Psoas muscle (tissue), 8 donors: ENCODE measurements at regions of chr18 and their contacts with region 1.

Region 1: GRCh38 chr18:49544362-49544761 is 17.5 kb upstream of the LIPG start:
- DNase-seq: no peak
- ATAC-seq: no peak
- H3K4me3 ChIP-seq: no peak overlapping the region
- H3K27ac ChIP-seq: no peak overlapping the region
- H3K4me1 ChIP-seq: no peaks in the 10 kb centered on the region
- H3K27me3 ChIP-seq: no peaks in the 10 kb centered on the region
- CTCF ChIP-seq: no peak

Region 2: DNA sequence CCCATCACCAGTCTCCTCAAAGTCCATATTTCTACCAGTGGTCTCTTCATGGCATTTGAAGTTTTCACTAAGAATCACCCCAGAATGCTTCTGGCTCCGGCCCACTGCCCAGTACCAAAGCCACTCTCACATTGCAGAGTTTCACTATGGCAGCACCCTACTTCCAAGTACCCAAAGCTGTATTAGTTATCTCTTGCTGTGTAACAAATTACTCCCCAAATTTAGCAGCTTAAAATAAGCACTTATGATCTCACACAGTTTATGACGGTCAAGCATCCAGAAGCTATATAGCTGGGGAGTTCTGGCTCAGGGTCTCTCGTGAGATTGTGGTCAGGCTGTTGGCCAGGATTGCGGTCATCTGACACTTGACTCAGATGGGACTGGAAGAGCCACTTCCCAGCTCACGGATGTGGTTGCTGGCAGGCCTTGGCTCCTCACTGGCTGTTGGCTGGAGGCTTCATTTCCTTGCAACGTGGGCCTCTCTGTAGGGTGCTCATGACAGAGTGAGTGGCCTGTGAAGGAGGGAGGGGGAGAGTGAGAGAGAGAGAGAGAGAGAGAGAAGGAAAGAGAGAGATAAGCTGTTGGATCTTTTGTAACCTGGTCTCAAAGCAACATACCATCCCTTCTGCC is 816.0 kb before region 1 on chr18:
- intact Hi-C with region 1: loop called in 1 of 2 experiments (anchors 5 kb)
- DNase-seq: peak in 1 of 2 donors; percentile 83
- ATAC-seq: peak; percentile 70 to 93 (median 90)
- H3K4me3 ChIP-seq: no peak overlapping the region
- H3K27ac ChIP-seq: peak overlapping the region; percentile 60
- H3K4me1 ChIP-seq: peaks cover 17% of the 10 kb centered on the region
- H3K27me3 ChIP-seq: no peaks in the 10 kb centered on the region
- CTCF ChIP-seq: no peak

Region 3: GRCh38 chr18:49476664-49477411 is 67.5 kb before region 1 on chr18:
- intact Hi-C with region 1: no loop called
- DNase-seq: no peak
- ATAC-seq: peak in 2 of 4 donors; percentile 44 to 57
- H3K4me3 ChIP-seq: peak overlapping the region; percentile 30
- H3K27ac ChIP-seq: peak overlapping the region; percentile 68
- H3K4me1 ChIP-seq: peaks cover 13% of the 10 kb centered on the region
- H3K27me3 ChIP-seq: no peaks in the 10 kb centered on the region
- CTCF ChIP-seq: no peak